ENCODE measurements at regions of chr11 and their contacts with region 1.

Region 1: GRCh38 chr11:45665206-45665932 is at the start of gene CHST1:
- DNase-seq: no peak
- H3K4me3 ChIP-seq: peak within 1 kb of the TSS; percentile 28
- H3K27me3 ChIP-seq: peaks cover 36% of the 10 kb centered on the region
- CTCF ChIP-seq: no peak
- polyA plus RNA-seq, gene CHST1: 0.04 TPM in 1 of 2 replicates, not detected in the other

Region 2: DNA sequence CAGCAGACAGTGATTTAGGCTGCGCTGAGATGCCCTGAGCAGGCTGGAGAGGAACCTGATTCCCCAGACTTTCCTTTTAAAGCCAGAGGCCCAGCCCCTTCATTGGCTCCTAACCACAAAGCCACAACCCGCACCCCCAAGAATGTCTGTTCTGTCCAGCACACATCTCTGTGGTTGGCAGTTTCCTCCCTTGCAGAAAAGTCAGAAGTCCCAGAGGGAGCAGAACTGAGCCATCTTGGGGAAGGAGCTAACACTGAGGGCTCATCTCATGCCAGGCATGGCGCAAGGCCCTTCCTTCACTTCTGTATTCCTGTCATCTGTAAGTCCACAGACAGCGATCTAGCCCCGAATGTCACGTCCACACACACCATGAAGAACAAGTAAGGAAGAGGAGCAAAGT is 282.1 kb before region 1 on chr11:
- CTCF ChIA-PET with region 1: no interaction called
- POLR2A ChIA-PET with region 1: interaction called, 21 read pairs
- DNase-seq: no peak
- H3K4me3 ChIP-seq: no peak overlapping the region
- H3K27me3 ChIP-seq: peaks cover 4% of the 10 kb centered on the region
- CTCF ChIP-seq: no peak